A673 (cell line): ENCODE measurements at regions of chr10 and their contacts with region 1.

Region 1: DNA sequence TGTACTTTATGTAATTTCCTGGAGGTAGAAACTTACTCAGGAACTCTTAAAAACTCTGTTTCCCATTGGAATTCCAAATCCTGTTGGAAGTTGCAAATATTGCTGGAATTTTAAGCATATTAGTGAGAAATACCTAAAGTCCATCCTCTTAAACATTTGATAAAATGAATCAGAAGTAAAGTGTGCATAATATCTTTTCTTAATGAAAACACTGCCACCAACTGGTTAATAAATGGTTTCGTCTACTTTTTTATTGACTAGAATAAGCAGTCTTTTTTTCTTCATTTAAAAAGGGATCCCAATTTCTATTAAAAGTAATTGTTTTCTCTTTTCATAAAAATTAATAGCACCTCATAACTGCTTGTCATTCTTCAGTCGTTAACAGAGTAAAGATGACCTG is 28.3 kb downstream of the NPS start:
- DNase-seq: peak; percentile 59
- H3K4me3 ChIP-seq: no peak overlapping the region
- H3K27ac ChIP-seq: no peak overlapping the region
- H3K4me1 ChIP-seq: peaks cover 10% of the 10 kb centered on the region
- H3K27me3 ChIP-seq: no peaks in the 10 kb centered on the region
- CTCF ChIP-seq: peak; percentile 61; the same call in 1 of the 2 replicates

Region 2: GRCh38 chr10:127243490-127244272 is 333.7 kb before region 1 on chr10:
- CTCF ChIA-PET with region 1: no interaction called
- POLR2A ChIA-PET with region 1: no interaction called
- intact Hi-C with region 1: loop called (anchors 2 kb)
- DNase-seq: peak; percentile 71
- H3K4me3 ChIP-seq: no peak overlapping the region
- H3K27ac ChIP-seq: no peak overlapping the region
- H3K4me1 ChIP-seq: no peaks in the 10 kb centered on the region
- H3K27me3 ChIP-seq: no peaks in the 10 kb centered on the region
- CTCF ChIP-seq: peak; percentile 87

Region 3: GRCh38 chr10:127354992-127355391 is 222.4 kb before region 1 on chr10:
- CTCF ChIA-PET with region 1: no interaction called
- POLR2A ChIA-PET with region 1: no interaction called
- intact Hi-C with region 1: loop called (anchors 5 kb)
- DNase-seq: no peak
- H3K4me3 ChIP-seq: no peak overlapping the region
- H3K27ac ChIP-seq: no peak overlapping the region
- H3K4me1 ChIP-seq: no peaks in the 10 kb centered on the region
- H3K27me3 ChIP-seq: no peaks in the 10 kb centered on the region
- CTCF ChIP-seq: peak; percentile 54